Motor neuron (in vitro differentiated cells): ENCODE measurements at regions of chr22 and their contacts with region 1.

Region 1: GRCh38 chr22:36277482-36278291 is 24.8 kb downstream of the APOL1 start:
- ATAC-seq: peak; percentile 33 to 86 (median 62)
- H3K4me3 ChIP-seq: no peak overlapping the region
- H3K27ac ChIP-seq: no peak overlapping the region
- H3K4me1 ChIP-seq: peaks cover 0 to 17% of the 10 kb centered on the region in 2 donors

Region 2: DNA sequence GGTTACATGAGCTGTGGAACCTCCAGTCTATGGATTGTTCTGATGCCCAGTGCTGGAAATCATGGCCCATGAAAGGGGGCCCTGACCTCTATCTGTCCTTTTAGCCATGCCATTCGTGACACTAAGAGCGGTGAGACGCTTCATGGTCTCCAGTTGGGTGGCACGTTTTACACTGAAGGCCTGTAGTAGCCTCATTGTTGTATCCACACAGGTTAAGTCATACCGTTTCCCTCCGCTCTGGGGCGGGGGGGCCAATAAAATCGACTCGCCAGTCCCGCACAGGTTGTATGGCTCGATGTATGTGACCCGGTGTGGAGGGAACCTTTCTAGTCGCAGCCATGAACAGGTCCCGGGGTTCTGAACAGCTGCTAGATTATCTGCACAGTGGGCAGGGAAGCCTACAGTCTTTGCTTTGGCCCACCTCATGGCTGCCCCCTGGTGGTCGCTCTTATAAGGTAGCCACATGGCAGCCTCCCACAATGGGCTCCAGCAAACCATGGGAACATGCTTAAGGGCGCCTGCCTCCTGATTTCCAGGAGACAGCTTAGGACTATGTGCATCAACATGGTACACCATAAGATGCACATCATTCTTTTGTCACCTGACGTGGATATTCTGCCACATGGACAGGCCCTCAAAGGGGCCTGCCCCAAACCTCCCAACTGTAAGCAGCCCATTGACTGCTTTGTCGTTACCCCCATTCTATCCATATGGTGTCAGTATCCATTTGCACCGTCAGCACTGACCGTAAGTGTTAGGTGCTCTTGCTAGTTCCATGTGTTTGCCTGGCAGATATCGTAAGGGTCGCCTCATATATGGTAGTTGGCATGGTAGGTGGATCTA is 97.4 kb before region 1 on chr22:
- in situ Hi-C with region 1: no loop called
- ATAC-seq: peak; percentile 33 to 100 (median 61)
- H3K4me3 ChIP-seq: no peak overlapping the region
- H3K27ac ChIP-seq: no peak overlapping the region
- H3K4me1 ChIP-seq: no peaks in the 10 kb centered on the region

Region 3: DNA sequence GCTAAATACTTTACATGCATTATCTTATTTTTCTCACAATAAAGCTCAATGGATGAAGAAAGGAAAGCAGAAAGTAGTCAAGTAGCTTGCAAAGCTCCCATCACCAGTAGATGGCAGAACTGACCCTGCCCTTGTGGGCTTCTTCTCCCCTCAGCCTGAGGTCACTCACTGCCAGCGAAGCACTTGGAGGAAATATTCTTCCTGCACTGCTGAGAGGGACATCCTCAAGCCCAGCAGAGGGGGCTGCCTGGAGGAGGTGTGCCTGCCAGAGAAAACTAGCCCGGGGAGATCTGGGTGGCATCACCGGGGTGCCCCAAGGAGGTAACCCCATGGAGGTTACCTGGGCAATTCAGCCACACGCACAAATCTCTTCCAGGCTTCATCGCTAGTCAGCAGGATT is 82.7 kb before region 1 on chr22:
- in situ Hi-C with region 1: loop called in 1 of 9 experiments (anchors 10 kb)
- ATAC-seq: peak in 7 of 8 experiments; percentile 13 to 58 (median 46)
- H3K4me3 ChIP-seq: no peak overlapping the region
- H3K27ac ChIP-seq: no peak overlapping the region
- H3K4me1 ChIP-seq: peaks cover 26 to 36% of the 10 kb centered on the region in 2 donors